Heart right ventricle (tissue), 16 donors: ENCODE measurements at regions of chr20 and their contacts with region 1.

Region 1: DNA sequence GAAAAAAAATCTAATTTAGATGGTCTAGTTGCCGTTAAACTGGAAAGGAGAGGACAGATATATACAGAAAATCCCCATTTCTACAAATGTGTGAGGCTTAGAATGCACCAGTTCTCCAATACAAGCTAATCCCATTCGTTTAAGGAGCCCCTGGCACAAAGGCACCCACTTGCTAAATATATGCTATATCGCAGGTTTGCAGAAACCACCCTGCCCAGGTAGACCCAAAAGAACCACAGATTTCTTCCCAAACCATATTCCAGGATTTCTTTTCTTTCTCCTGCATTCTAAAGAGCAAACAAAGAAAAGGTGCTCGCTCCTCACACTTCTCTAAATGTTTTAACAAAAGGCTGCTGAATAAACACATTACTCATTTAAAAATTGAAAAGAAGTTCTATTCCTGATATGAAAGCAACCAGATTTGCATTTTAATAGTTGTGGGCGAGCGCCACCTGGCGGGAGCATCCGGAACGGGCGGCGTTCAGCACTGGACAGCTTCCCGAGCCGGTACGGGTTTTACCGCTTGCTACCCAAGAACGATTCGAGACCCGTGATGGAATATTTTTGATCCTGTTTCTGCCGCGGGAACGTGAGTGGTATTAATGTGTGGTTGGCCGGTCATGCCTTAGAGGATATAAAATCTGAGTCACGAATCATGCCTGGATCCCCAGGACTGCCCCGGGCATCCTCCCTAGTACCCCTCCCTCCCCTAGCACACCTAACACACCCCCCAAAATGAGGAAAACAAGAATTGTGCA is 2.1 kb downstream of the PTPRT start:
- DNase-seq: peak; percentile 50 to 74
- ATAC-seq: peak in 7 of 8 donors; percentile 44 to 73 (median 55)
- H3K4me3 ChIP-seq: peak overlapping the region in 5 of 10 donors; percentile 24 to 46 (median 40)
- H3K27ac ChIP-seq: no peak overlapping the region
- H3K4me1 ChIP-seq: peaks cover 0 to 17% (median 8%) of the 10 kb centered on the region in 9 donors
- H3K27me3 ChIP-seq: peaks cover 0 to 70% (median 62%) of the 10 kb centered on the region in 7 donors
- CTCF ChIP-seq: peak; percentile 80 to 97 (median 96)

Region 2: DNA sequence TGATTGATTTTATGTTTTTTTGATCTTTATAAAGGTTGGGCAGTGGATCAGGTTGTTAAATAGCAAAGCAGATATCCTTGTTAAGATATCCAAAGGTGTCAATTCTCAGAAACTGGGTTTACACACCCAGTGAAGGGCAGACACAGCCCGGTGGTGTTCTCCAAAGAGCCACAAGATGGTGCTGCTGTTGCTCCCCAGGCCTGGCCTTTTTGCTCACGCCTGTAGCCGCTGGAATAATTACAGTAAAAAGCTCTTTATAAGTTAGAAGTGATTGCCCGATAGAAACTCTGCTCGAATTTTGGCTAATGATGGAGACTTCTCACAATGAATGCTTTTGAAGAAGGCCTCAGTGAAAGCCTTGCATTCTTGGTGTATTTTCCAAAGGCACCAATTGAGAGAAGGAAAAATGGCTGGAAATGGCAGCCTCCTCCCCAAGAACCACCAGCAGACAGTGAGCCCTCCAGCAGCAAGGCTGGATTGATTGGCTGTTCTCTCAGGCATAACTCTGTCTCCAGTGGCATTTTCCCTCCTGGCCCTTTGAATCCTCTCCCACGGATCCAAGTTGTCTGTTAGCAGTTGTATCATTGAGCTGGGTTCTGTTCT is 1449.0 kb before region 1 on chr20:
- intact Hi-C with region 1: loop called (anchors 1 to 10 kb)
- DNase-seq: peak; percentile 23 to 38
- ATAC-seq: peak in 7 of 8 donors; percentile 54 to 71 (median 66)
- H3K4me3 ChIP-seq: no peak overlapping the region
- H3K27ac ChIP-seq: no peak overlapping the region
- H3K4me1 ChIP-seq: no peaks in the 10 kb centered on the region
- H3K27me3 ChIP-seq: no peaks in the 10 kb centered on the region
- CTCF ChIP-seq: peak; percentile 42 to 87 (median 79)

Region 3: GRCh38 chr20:41889126-41889870 is 1298.4 kb before region 1 on chr20:
- intact Hi-C with region 1: loop called in 2 of 10 experiments (anchors 5 to 10 kb)
- DNase-seq: no peak
- ATAC-seq: no peak
- H3K4me3 ChIP-seq: no peak overlapping the region
- H3K27ac ChIP-seq: no peak overlapping the region
- H3K4me1 ChIP-seq: no peaks in the 10 kb centered on the region
- H3K27me3 ChIP-seq: peaks cover 0 to 24% (median 0%) of the 10 kb centered on the region in 7 donors
- CTCF ChIP-seq: peak in 6 of 9 donors; percentile 13 to 46 (median 34)

Region 4: DNA sequence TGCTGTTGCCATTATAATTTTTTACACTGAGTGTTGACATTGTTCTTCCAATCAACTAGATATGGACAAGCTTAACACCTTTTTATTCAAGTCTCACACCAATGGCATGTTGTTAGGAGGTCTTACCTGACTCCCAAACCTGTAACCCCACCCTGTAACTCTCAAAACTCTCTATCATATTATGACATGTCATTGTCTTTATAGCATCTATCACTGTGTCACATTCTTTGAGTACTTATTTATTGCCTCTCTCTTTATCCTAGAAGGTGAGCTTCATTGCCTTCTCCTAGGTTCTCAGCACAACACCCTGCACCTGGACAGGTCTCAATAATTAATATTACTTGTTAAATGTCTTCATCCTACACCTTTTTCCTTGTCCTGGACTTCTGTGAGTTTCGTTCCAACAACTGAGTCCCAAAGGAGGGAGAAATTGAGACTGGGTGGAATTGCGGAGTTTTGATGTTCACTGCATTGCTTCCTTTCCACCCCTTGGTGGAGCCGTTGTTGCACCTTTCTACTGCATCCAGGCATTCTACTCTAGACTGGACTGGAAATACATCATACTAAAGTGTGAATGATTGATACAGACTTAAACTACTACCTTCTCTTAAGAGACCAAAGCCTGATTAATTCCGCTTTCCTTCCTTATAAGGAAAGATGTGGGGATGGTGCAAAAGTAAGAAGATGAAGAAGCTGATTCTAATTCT is 1231.5 kb before region 1 on chr20:
- intact Hi-C with region 1: loop called in 4 of 10 experiments (anchors 2 to 10 kb)
- DNase-seq: peak in 1 of 2 donors; percentile 4
- ATAC-seq: peak in 2 of 8 donors; percentile 39 to 41
- H3K4me3 ChIP-seq: no peak overlapping the region
- H3K27ac ChIP-seq: no peak overlapping the region
- H3K4me1 ChIP-seq: no peaks in the 10 kb centered on the region
- H3K27me3 ChIP-seq: peaks cover 0 to 15% (median 0%) of the 10 kb centered on the region in 7 donors
- CTCF ChIP-seq: peak; percentile 18 to 61 (median 49)

Region 5: DNA sequence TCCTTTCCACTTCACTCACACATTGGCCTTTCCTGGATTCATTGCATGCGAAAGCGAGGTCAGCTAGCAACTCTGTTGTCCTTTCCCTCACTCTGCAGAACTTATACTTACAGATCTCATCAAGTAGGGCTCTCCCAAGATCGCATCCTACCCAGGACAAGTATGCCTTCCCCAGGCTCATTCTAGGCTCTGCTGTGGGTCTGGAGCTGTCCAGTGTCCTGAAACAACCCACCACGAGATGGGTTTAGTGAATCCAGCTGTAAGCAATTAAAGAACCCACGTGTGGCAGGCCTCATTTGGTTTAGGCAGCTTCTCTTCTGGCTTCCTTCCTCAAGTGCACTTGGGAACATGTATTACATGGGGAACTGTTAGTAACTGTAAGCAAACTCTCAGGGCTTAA is 1163.0 kb before region 1 on chr20:
- intact Hi-C with region 1: loop called in 1 of 10 experiments (anchors 5 kb)
- DNase-seq: peak in 1 of 2 donors; percentile 29
- ATAC-seq: no peak
- H3K4me3 ChIP-seq: no peak overlapping the region
- H3K27ac ChIP-seq: no peak overlapping the region
- H3K4me1 ChIP-seq: no peaks in the 10 kb centered on the region
- H3K27me3 ChIP-seq: peaks cover 0 to 4% (median 0%) of the 10 kb centered on the region in 7 donors
- CTCF ChIP-seq: no peak

Region 6: DNA sequence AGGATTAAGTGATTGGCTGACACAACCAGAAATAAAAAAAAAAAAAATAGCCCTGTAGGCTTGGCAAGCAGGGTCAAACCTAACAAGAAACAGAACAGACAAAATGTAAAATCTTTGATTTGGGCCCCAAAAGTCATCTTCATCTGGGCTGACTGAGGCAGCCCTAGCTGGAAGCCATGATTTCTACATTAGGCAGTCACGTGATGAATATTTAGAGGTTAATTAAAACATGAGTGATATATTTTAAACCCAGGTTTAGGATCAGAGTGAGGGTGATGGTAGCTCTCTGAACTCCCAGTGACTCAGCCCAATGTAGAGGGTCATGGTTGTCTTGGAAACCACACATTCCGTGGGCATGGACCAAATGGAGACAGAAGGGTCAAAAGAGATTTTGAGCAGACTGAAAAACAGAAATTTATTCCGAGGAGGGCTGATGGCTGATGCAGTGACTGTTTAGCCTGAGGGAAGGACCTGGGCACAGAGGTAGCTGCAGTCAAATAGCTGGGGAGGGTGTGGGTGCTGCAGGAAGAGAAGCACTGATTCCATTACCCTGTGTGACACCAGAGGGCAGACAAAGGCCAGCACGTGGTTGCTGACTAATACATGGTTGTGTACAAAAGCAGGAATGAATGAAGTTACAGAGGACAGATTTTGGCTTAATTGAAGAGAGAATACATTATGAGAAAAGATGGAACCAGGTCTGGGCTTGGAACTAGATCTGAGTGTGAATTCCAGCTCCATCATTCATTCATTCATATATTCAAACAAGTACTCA is 996.3 kb before region 1 on chr20:
- intact Hi-C with region 1: loop called in 2 of 10 experiments (anchors 10 kb)
- DNase-seq: no peak
- ATAC-seq: no peak
- H3K4me3 ChIP-seq: no peak overlapping the region
- H3K27ac ChIP-seq: no peak overlapping the region
- H3K4me1 ChIP-seq: no peaks in the 10 kb centered on the region
- H3K27me3 ChIP-seq: no peaks in the 10 kb centered on the region
- CTCF ChIP-seq: peak in 1 of 9 donors; percentile 34

Region 7: DNA sequence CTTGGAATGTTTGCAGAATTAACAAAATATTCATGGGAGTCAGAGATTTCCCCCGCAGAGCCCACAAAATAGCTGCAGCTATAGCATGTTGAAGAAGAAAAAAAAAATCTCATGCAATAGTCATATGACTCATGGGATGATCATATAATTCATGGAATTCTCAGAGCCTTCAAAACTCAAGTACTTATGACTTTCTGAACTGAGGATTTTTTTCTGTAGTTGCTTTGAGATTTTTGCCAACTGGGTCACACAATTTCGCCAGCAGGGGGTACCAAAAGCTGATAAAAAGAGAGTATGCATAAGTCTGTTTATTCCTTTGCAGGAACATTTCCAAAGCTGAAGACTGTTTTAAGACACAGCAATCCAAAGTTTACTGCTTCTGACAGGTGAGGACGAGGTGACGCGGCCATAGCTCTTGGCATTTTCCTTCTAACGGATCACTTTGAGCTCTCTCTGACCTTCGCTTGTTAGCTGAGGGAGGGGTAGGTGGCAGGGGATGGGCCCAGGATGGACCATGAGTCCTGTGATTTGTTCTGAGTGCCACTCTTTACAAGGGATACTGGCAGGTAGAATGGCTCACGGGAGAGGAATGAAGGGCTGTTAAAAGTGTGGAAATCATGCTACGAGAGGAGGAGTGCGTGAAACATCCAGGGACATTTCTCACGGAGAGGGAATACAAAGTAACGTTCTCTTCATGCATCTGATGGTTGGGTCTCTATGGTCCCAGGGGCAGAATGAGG is 983.3 kb before region 1 on chr20:
- intact Hi-C with region 1: loop called in 6 of 10 experiments (anchors 5 to 10 kb)
- DNase-seq: peak in 1 of 2 donors; percentile 19
- ATAC-seq: no peak
- H3K4me3 ChIP-seq: no peak overlapping the region
- H3K27ac ChIP-seq: no peak overlapping the region
- H3K4me1 ChIP-seq: peaks cover 0 to 9% (median 0%) of the 10 kb centered on the region in 9 donors
- H3K27me3 ChIP-seq: no peaks in the 10 kb centered on the region
- CTCF ChIP-seq: peak; percentile 14 to 64 (median 46)